ENCODE measurements at regions of chr5 and their contacts with region 1.

Region 1: GRCh38 chr5:39283231-39283818 is 64.0 kb upstream of the FYB1 start:
- DNase-seq: peak; percentile 77 to 79
- H3K4me3 ChIP-seq: no peak overlapping the region
- H3K4me3 Mint-ChIP-seq: no peak overlapping the region
- H3K27ac Mint-ChIP-seq: peak overlapping the region; percentile 65
- H3K4me1 ChIP-seq: peaks cover 18% of the 10 kb centered on the region
- H3K4me1 Mint-ChIP-seq: peaks cover 24% of the 10 kb centered on the region
- H3K27me3 ChIP-seq: no peaks in the 10 kb centered on the region
- H3K27me3 Mint-ChIP-seq: no peaks in the 10 kb centered on the region
- CTCF ChIP-seq: peak; percentile 70 to 73

Region 2: DNA sequence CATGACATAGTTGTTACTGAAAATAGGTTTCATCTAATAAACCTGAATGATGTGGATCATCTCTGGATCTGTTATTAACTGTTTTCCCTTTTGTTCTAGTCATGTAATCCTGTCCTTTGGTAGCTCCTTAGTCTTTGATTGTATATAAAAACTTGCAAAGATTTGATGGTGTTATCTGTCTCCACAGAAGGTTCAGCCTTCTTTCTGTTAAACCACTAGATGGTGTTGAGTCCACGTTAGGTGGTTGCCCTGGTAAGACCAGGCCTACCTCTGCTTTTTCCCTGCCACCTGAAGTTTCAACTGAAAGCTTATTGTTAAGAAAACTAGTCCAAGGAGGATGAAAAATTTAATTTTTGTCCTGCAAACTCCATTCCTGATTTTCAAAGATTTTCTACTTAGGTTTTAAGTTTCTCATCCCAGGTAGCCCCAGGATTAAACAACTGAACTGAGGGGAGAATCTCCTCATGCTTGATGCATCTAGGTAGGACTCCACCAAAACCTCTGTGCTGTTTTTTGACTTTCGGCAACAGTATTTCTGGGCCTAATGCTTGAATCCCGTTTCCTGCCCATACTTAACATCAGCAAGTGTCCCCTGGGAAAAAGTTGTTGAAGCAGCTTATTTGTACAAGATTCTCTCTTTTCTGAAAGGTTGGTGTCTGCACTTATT is 277.6 kb before region 1 on chr5:
- CTCF ChIA-PET with region 1: no interaction called
- POLR2A ChIA-PET with region 1: no interaction called
- intact Hi-C with region 1: loop called (anchors 5 kb)
- DNase-seq: peak in 1 of 2 experiments; percentile 12
- H3K4me3 ChIP-seq: no peak overlapping the region
- H3K4me3 Mint-ChIP-seq: no peak overlapping the region
- H3K27ac Mint-ChIP-seq: no peak overlapping the region
- H3K4me1 ChIP-seq: no peaks in the 10 kb centered on the region
- H3K4me1 Mint-ChIP-seq: no peaks in the 10 kb centered on the region
- H3K27me3 ChIP-seq: no peaks in the 10 kb centered on the region
- H3K27me3 Mint-ChIP-seq: no peaks in the 10 kb centered on the region
- CTCF ChIP-seq: peak in 1 of 2 experiments; percentile 49

Region 3: DNA sequence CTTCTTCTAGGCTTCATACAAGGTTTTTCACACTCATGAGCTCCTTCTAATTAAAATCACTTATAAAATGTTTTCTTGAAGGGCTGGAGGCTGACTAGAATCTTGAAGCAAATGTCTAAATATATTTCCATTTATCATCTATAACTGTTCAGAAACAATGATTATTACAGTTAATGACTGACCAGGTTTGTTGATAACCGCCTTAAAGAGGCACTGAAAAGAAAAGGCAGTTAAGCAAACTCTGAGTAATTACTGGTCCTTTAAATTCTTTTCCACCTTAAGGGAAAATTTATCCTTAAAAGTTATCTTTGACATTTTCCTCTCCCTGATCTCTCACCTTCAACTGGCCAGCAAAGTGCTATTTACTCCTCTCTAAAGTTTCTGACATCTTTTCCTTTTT is 252.3 kb before region 1 on chr5:
- CTCF ChIA-PET with region 1: no interaction called
- POLR2A ChIA-PET with region 1: no interaction called
- intact Hi-C with region 1: no loop called
- DNase-seq: no peak
- H3K4me3 ChIP-seq: no peak overlapping the region
- H3K4me3 Mint-ChIP-seq: no peak overlapping the region
- H3K27ac Mint-ChIP-seq: no peak overlapping the region
- H3K4me1 ChIP-seq: peaks cover 17% of the 10 kb centered on the region
- H3K4me1 Mint-ChIP-seq: peaks cover 15% of the 10 kb centered on the region
- H3K27me3 ChIP-seq: no peaks in the 10 kb centered on the region
- H3K27me3 Mint-ChIP-seq: no peaks in the 10 kb centered on the region
- CTCF ChIP-seq: no peak

Region 4: GRCh38 chr5:39148983-39149534 is 134.3 kb before region 1 on chr5:
- CTCF ChIA-PET with region 1: no interaction called
- POLR2A ChIA-PET with region 1: no interaction called
- intact Hi-C with region 1: loop called (anchors 1 kb)
- DNase-seq: peak in 1 of 2 experiments; percentile 20
- H3K4me3 ChIP-seq: no peak overlapping the region
- H3K4me3 Mint-ChIP-seq: no peak overlapping the region
- H3K27ac Mint-ChIP-seq: no peak overlapping the region
- H3K4me1 ChIP-seq: peaks cover 8% of the 10 kb centered on the region; the same call in 1 of the 2 replicates
- H3K4me1 Mint-ChIP-seq: peaks cover 11% of the 10 kb centered on the region
- H3K27me3 ChIP-seq: no peaks in the 10 kb centered on the region
- H3K27me3 Mint-ChIP-seq: no peaks in the 10 kb centered on the region
- CTCF ChIP-seq: peak in 1 of 2 experiments; percentile 19

Region 5: DNA sequence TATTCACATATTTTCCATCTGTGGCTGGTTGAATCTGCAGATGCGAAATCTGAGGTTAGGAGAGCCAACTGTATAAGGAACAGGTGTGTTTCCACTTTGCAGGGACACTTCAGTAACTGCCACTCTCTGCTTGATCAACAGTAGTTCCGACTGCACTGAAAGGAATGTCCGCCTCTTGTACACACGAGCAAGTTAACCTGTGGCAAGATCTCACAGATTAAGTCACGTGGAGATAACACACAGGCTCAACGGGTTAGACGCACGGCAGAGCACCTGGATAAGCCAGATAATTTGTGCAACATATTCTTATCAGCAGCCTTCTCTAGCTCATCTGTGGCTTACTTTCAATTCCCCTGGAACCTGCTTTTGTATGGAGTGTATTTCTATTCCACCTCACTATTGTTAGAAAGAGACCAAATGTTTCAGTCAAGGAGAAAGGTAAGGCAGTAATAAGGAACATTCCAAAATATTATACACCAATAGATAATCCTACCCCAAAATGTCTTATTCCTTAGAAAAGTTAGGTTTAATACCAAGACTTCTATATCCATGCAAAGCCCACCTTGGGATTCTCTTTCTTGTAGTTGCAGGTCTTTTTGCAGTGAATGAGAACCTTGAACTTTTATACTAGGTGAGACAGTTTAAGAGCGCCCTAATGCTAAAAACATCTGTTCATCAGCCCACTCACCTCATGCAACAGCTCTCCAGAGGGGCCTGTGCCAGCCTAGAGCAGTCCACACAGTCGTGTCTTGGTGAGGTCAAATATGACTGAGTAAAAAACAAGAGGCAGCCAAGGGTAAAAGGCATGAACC is 87.4 kb after region 1 on chr5:
- CTCF ChIA-PET with region 1: no interaction called
- POLR2A ChIA-PET with region 1: no interaction called
- intact Hi-C with region 1: loop called (anchors 1 kb)
- DNase-seq: peak; percentile 88 to 91
- H3K4me3 ChIP-seq: no peak overlapping the region
- H3K4me3 Mint-ChIP-seq: peak overlapping the region; percentile 56
- H3K27ac Mint-ChIP-seq: peak overlapping the region; percentile 72
- H3K4me1 ChIP-seq: peaks cover 35% of the 10 kb centered on the region
- H3K4me1 Mint-ChIP-seq: peaks cover 24% of the 10 kb centered on the region
- H3K27me3 ChIP-seq: no peaks in the 10 kb centered on the region
- H3K27me3 Mint-ChIP-seq: no peaks in the 10 kb centered on the region
- CTCF ChIP-seq: no peak

Region 6: GRCh38 chr5:39411051-39411450 is 127.7 kb after region 1 on chr5:
- CTCF ChIA-PET with region 1: no interaction called
- POLR2A ChIA-PET with region 1: no interaction called
- intact Hi-C with region 1: no loop called
- DNase-seq: no peak
- H3K4me3 ChIP-seq: no peak overlapping the region
- H3K4me3 Mint-ChIP-seq: no peak overlapping the region
- H3K27ac Mint-ChIP-seq: no peak overlapping the region
- H3K4me1 ChIP-seq: peaks cover 55% of the 10 kb centered on the region
- H3K4me1 Mint-ChIP-seq: peaks cover 37% of the 10 kb centered on the region
- H3K27me3 ChIP-seq: no peaks in the 10 kb centered on the region
- H3K27me3 Mint-ChIP-seq: no peaks in the 10 kb centered on the region
- CTCF ChIP-seq: no peak

Measured in Caco-2 (cell line).